ENCODE measurements at regions of chr20 and their contacts with region 1.

Region 1: GRCh38 chr20:35287509-35288343 is 3.2 kb upstream of the EIF6 start:
- DNase-seq: no peak
- H3K4me3 ChIP-seq: no peak overlapping the region
- H3K27ac ChIP-seq: no peak overlapping the region
- H3K4me1 ChIP-seq: peaks cover 13% of the 10 kb centered on the region
- CTCF ChIP-seq: no peak

Region 2: DNA sequence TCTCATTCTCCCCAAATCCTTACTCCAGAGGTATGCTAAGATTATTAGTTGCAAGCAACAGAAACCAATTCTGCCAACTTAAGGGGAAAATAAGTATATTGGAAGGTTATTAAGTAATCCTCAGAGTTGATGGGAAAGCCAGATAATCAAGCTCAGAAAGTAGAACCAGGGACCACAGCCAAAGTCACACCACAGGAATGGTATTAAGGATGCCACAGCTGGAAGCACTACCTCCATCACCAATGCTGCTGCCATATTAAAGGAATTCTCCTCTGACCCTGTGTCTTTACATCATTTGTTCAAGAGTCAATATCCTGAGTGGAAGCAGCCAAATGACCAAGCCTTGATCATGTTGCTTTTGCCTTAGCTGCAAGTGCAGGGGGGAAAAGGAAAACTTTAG is 106.0 kb before region 1 on chr20:
- CTCF ChIA-PET with region 1: no interaction called
- POLR2A ChIA-PET with region 1: no interaction called
- intact Hi-C with region 1: no loop called
- DNase-seq: no peak
- H3K4me3 ChIP-seq: no peak overlapping the region
- H3K27ac ChIP-seq: no peak overlapping the region
- H3K4me1 ChIP-seq: no peaks in the 10 kb centered on the region
- CTCF ChIP-seq: no peak

Region 3: GRCh38 chr20:35421322-35421721 is 133.6 kb after region 1 on chr20:
- CTCF ChIA-PET with region 1: no interaction called
- POLR2A ChIA-PET with region 1: no interaction called
- intact Hi-C with region 1: no loop called
- DNase-seq: no peak
- H3K4me3 ChIP-seq: no peak overlapping the region
- H3K27ac ChIP-seq: no peak overlapping the region
- H3K4me1 ChIP-seq: no peaks in the 10 kb centered on the region
- CTCF ChIP-seq: no peak

Region 4: DNA sequence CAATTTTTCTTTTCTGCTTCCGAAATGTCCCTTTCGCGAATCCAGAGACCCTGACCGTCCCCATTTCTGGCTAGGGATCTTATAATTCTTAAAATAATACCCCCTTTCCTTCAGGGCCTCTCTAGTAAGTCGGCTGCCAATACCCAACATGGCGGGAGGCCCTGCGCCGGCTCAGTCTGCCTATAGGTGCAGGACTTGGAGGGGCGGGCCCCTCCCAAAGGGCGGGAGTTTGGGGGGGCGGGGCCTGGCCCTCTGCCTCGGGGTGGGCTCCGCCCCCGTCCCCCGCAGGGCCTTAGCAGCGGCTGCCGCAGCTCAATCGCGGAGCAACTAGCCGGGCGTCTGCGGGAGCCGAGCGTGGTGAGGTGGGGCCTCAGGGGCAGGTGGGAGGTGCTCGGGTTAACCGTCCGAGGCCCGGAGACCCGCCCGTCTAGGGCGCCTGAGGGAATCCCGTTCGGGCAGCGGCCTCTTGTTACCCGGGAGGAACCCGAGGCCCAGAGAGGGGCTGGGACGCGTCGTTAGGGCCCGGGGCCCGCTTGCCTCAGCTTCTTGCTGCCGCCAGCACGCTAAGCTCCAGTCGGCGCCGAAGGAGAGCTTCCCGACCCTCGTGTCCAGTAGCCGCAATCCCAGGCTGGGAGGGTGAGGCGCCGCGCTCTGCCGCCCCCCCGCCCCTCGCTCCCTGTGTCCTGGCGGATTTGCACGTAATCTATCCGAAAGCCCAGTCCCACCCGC is 167.3 kb after region 1 on chr20 and contains the start of gene CEP250:
- CTCF ChIA-PET with region 1: no interaction called
- POLR2A ChIA-PET with region 1: interaction called, 11 read pairs
- intact Hi-C with region 1: no loop called
- DNase-seq: peak; percentile 98
- H3K4me3 ChIP-seq: peak within 1 kb of the TSS; percentile 79
- H3K27ac ChIP-seq: peak within 1 kb of the TSS; percentile 64
- H3K4me1 ChIP-seq: peaks cover 21% of the 10 kb centered on the region
- CTCF ChIP-seq: no peak
- total RNA-seq, gene CEP250: 28.6 and 31.6 TPM in 2 replicates